ENCODE measurements at regions of chr7 and their contacts with region 1.

Region 1: DNA sequence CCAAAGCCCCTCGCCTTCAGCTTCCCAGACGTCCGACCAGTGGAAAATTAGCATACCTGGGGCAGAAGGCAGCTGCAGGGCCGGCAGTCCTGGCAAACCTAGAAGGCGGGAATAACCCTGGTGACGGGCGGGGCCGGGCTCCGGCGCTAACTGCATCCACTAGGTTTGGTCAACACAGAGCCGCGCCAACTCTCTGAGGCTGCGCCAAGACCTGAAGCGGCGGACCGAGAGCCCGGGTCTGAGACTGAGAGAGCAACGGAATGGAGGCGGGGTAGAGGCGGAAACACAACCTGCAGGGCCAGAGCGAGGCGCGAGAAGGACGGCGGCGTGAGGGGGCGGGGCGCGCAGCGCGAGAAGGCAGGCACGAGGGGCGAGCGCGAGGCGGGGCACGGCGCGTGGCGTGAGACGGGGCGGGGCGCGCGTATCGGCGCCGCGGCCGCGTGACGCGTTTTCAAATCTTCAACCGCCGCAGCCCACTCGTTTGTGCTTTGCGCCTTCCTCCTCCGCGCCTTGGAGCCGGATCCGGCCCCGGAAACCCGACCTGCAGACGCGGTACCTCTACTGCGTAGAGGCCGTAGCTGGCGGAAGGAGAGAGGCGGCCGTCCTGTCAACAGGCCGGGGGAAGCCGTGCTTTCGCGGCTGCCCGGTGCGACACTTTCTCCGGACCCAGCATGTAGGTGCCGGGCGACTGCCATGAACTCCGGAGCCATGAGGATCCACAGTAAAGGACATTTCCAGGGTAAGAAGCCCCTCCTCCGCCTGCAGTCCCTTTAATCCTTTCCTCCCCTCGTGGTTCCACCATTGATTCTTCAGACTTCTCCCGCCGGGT is at the starts of genes DBF4 and SLC25A40:
- DNase-seq: peak; percentile 98
- ATAC-seq: peak; percentile 91
- H3K4me3 Mint-ChIP-seq: peak within 1 kb of the TSS; percentile 95
- H3K27ac Mint-ChIP-seq: peak within 1 kb of the TSS; percentile 96
- H3K4me1 Mint-ChIP-seq: peaks cover 43% of the 10 kb centered on the region
- H3K27me3 Mint-ChIP-seq: no peaks in the 10 kb centered on the region
- CTCF ChIP-seq: no peak
- total RNA-seq, gene DBF4: 20.2 and 30.3 TPM in 2 replicates
- total RNA-seq, gene SLC25A40: 16.6 and 21.7 TPM in 2 replicates

Region 2: GRCh38 chr7:86939197-86939814 is 936.9 kb before region 1 on chr7:
- CTCF ChIA-PET with region 1: no interaction called
- POLR2A ChIA-PET with region 1: no interaction called
- intact Hi-C with region 1: loop called (anchors 10 kb)
- DNase-seq: no peak
- ATAC-seq: peak; percentile 66
- H3K4me3 Mint-ChIP-seq: no peak overlapping the region
- H3K27ac Mint-ChIP-seq: no peak overlapping the region
- H3K4me1 Mint-ChIP-seq: no peaks in the 10 kb centered on the region
- H3K27me3 Mint-ChIP-seq: no peaks in the 10 kb centered on the region
- CTCF ChIP-seq: peak; percentile 35

Region 3: GRCh38 chr7:87219545-87220025 is 656.7 kb before region 1 on chr7 and contains the start of gene TMEM243:
- CTCF ChIA-PET with region 1: no interaction called
- POLR2A ChIA-PET with region 1: no interaction called
- intact Hi-C with region 1: loop called (anchors 1 kb)
- DNase-seq: peak; percentile 85
- ATAC-seq: peak; percentile 60
- H3K4me3 Mint-ChIP-seq: peak within 1 kb of the TSS; percentile 98
- H3K27ac Mint-ChIP-seq: peak within 1 kb of the TSS; percentile 99
- H3K4me1 Mint-ChIP-seq: peaks cover 51% of the 10 kb centered on the region
- H3K27me3 Mint-ChIP-seq: no peaks in the 10 kb centered on the region
- CTCF ChIP-seq: no peak
- total RNA-seq, gene TMEM243: 106 and 111 TPM in 2 replicates

Region 4: GRCh38 chr7:87600130-87601124 is 275.8 kb before region 1 on chr7 and contains the start of gene ABCB1:
- CTCF ChIA-PET with region 1: no interaction called
- POLR2A ChIA-PET with region 1: interaction called, 3 read pairs
- intact Hi-C with region 1: loop called (anchors 2 kb)
- DNase-seq: peak; percentile 37
- ATAC-seq: peak; percentile 73
- H3K4me3 Mint-ChIP-seq: peak within 1 kb of the TSS; percentile 89
- H3K27ac Mint-ChIP-seq: peak within 1 kb of the TSS; percentile 76
- H3K4me1 Mint-ChIP-seq: peaks cover 22% of the 10 kb centered on the region
- H3K27me3 Mint-ChIP-seq: peaks cover 33% of the 10 kb centered on the region
- CTCF ChIP-seq: no peak
- total RNA-seq, gene ABCB1: 4.1 and 4.7 TPM in 2 replicates

Region 5: DNA sequence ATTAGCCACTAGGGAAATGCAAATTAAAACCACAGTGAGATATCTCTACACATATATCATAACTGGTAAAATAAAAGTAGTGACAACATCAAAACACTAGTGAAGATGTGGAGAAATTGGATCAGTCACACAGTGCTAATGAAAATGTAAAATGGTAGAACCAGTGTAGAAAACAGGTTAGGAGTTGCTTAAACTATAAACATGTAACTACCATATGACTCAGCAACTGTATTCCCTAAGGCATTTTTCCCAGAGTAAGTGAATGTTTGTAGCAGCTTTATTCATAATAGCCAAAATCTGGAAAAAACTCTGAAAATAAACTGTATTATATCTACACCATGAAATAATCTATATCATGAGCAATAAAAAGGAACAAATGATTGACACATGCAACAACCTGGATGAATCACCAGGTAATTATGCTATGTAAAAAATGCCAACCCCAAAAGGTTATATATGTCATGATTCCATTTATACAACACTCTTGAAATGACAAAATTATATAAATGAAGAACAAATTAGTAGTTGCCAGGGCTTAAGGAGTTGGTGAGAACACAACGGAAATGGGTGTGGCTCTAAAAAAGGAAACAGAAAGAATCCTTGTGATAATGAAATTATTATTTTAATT is 22.9 kb before region 1 on chr7:
- CTCF ChIA-PET with region 1: no interaction called
- POLR2A ChIA-PET with region 1: interaction called, 6 read pairs
- intact Hi-C with region 1: loop called (anchors 2 kb)
- DNase-seq: no peak
- ATAC-seq: no peak
- H3K4me3 Mint-ChIP-seq: no peak overlapping the region
- H3K27ac Mint-ChIP-seq: no peak overlapping the region
- H3K4me1 Mint-ChIP-seq: peaks cover 20% of the 10 kb centered on the region
- H3K27me3 Mint-ChIP-seq: no peaks in the 10 kb centered on the region
- CTCF ChIP-seq: no peak

Region 6: GRCh38 chr7:87933945-87934698 is 57.9 kb after region 1 on chr7 and contains the start of gene ADAM22:
- CTCF ChIA-PET with region 1: no interaction called
- POLR2A ChIA-PET with region 1: no interaction called
- intact Hi-C with region 1: loop called (anchors 1 kb)
- DNase-seq: peak; percentile 68
- ATAC-seq: peak; percentile 97
- H3K4me3 Mint-ChIP-seq: peak within 1 kb of the TSS; percentile 89
- H3K27ac Mint-ChIP-seq: peak within 1 kb of the TSS; percentile 32
- H3K4me1 Mint-ChIP-seq: peaks cover 14% of the 10 kb centered on the region
- H3K27me3 Mint-ChIP-seq: peaks cover 11% of the 10 kb centered on the region
- CTCF ChIP-seq: no peak
- total RNA-seq, gene ADAM22: 0.71 and 0.88 TPM in 2 replicates

Region 7: GRCh38 chr7:88001744-88002530 is 125.7 kb after region 1 on chr7:
- CTCF ChIA-PET with region 1: no interaction called
- POLR2A ChIA-PET with region 1: no interaction called
- intact Hi-C with region 1: no loop called
- DNase-seq: no peak
- ATAC-seq: no peak
- H3K4me3 Mint-ChIP-seq: no peak overlapping the region
- H3K27ac Mint-ChIP-seq: no peak overlapping the region
- H3K4me1 Mint-ChIP-seq: no peaks in the 10 kb centered on the region
- H3K27me3 Mint-ChIP-seq: no peaks in the 10 kb centered on the region
- CTCF ChIP-seq: no peak

Region 8: GRCh38 chr7:88396295-88396947 is 520.2 kb after region 1 on chr7:
- CTCF ChIA-PET with region 1: no interaction called
- POLR2A ChIA-PET with region 1: no interaction called
- intact Hi-C with region 1: no loop called
- DNase-seq: no peak
- ATAC-seq: no peak
- H3K4me3 Mint-ChIP-seq: no peak overlapping the region
- H3K27ac Mint-ChIP-seq: no peak overlapping the region
- H3K4me1 Mint-ChIP-seq: peaks cover 10% of the 10 kb centered on the region
- H3K27me3 Mint-ChIP-seq: no peaks in the 10 kb centered on the region
- CTCF ChIP-seq: no peak

Measured in activated B cell treated with CpG ODN at 0.5 μM for 24 hours (primary cell).